Dorsolateral prefrontal cortex (tissue), 120 donors: ENCODE measurements at regions of chr1 and their contacts with region 1.

Region 1: GRCh38 chr1:202968840-202969295 is 1.8 kb upstream of the CYB5R1 start:
- DNase-seq: peak in 2 of 10 donors; percentile 10 to 44
- H3K4me3 ChIP-seq: peak overlapping the region in 4 of 59 donors; percentile 86 to 95 (median 88)
- H3K27ac ChIP-seq: peak overlapping the region in 44 of 59 donors; percentile 5 to 96 (median 78)
- H3K27me3 ChIP-seq: no peaks in the 10 kb centered on the region
- CTCF ChIP-seq: peak in 54 of 56 donors; percentile 20 to 68 (median 54)

Region 2: DNA sequence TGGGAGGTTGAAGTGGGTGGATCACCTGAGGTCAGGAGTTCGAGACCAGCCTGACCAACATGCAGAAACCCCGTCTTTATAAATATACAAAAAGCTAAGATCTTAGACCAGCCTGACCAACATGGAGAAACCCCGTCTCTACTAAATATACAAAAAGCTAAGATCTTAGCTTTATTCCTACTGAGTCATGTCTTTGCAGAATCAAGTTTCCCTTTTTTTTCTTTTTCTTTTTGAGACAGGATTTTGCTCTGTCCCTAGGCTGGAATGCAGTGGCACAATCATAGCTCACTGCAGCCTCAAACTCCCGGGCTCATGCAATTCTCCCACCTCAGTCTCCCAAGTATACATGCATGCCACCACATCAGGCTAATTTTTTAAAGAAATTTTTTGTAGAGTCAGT is 182.1 kb before region 1 on chr1:
- intact Hi-C with region 1: no loop called
- DNase-seq: no peak
- H3K4me3 ChIP-seq: no peak overlapping the region
- H3K27ac ChIP-seq: no peak overlapping the region
- H3K27me3 ChIP-seq: no peaks in the 10 kb centered on the region
- CTCF ChIP-seq: no peak

Region 3: GRCh38 chr1:202888531-202889360 is 80.1 kb before region 1 on chr1 and contains the start of gene RABIF:
- intact Hi-C with region 1: loop called in 1 of 2 experiments (anchors 5 kb)
- DNase-seq: peak; percentile 92 to 97 (median 96)
- H3K4me3 ChIP-seq: peak within 1 kb of the TSS; percentile 55 to 98 (median 89)
- H3K27ac ChIP-seq: peak within 1 kb of the TSS; percentile 81 to 100 (median 97)
- H3K27me3 ChIP-seq: no peaks in the 10 kb centered on the region
- CTCF ChIP-seq: peak in 40 of 56 donors; percentile 7 to 58 (median 36)
- total RNA-seq, gene RABIF: 9.4 to 26.6 (median 17.3) TPM

Region 4: GRCh38 chr1:202926720-202927491 is 42.0 kb before region 1 on chr1 and contains the start of gene KLHL12:
- intact Hi-C with region 1: loop called (anchors 2 kb)
- DNase-seq: peak; percentile 93 to 99 (median 96)
- H3K4me3 ChIP-seq: peak within 1 kb of the TSS; percentile 55 to 99 (median 93)
- H3K27ac ChIP-seq: peak within 1 kb of the TSS; percentile 78 to 98 (median 95)
- H3K27me3 ChIP-seq: no peaks in the 10 kb centered on the region
- CTCF ChIP-seq: peak in 54 of 56 donors; percentile 13 to 62 (median 45)
- total RNA-seq, gene KLHL12: 22.3 to 47.0 (median 36.2) TPM

Region 5: DNA sequence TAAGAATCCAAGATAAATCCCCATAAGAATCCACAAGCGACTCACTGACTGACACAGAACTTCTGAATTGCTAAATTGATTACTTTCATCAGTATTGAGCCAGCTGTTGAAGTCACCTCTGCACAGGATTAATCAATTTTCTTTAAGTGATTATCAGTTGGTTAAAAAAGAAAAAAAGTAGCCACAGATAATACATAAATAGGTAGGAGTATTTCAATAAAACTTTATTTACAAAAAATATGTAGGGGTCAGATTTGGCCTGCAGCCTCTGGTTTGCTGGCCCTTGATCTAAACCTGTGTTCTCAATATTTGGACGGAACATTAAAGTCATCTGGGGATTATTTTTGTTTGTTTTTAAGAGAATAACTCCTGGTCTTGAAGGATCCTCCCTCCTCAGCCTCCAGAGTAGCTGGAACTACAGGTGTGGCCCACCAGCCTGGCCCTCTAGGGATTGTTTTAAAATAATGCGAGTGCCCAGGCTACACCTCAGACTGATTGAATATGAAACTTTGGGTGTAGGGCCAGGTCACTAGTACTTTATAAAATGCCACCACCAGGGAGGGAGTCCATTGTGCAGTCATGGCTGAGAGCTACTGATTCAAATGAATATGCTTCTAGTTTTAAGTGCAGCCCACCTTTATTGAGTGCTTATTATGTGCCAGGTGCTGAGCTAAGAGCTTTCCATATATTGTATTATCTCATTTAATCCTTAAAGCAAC is 31.5 kb after region 1 on chr1:
- intact Hi-C with region 1: loop called in 1 of 2 experiments (anchors 2 kb)
- DNase-seq: no peak
- H3K4me3 ChIP-seq: no peak overlapping the region
- H3K27ac ChIP-seq: no peak overlapping the region
- H3K27me3 ChIP-seq: peaks cover 0 to 13% (median 0%) of the 10 kb centered on the region in 45 donors
- CTCF ChIP-seq: no peak

Region 6: GRCh38 chr1:203006948-203007871 is 38.3 kb after region 1 on chr1 and contains the start of gene TMEM183A:
- intact Hi-C with region 1: loop called (anchors 2 kb)
- DNase-seq: peak; percentile 94 to 98 (median 96)
- H3K4me3 ChIP-seq: peak within 1 kb of the TSS; percentile 59 to 98 (median 87)
- H3K27ac ChIP-seq: peak within 1 kb of the TSS in 58 of 59 donors; percentile 7 to 97 (median 82)
- H3K27me3 ChIP-seq: no peaks in the 10 kb centered on the region
- CTCF ChIP-seq: peak in 12 of 56 donors; percentile 9 to 45 (median 24)
- total RNA-seq, gene TMEM183A: 37.4 to 106 (median 77.4) TPM